Activated B cell treated with CpG ODN at 0.5 μM for 24 hours (primary cell): ENCODE measurements at regions of chr14 and their contacts with region 1.

Region 1: DNA sequence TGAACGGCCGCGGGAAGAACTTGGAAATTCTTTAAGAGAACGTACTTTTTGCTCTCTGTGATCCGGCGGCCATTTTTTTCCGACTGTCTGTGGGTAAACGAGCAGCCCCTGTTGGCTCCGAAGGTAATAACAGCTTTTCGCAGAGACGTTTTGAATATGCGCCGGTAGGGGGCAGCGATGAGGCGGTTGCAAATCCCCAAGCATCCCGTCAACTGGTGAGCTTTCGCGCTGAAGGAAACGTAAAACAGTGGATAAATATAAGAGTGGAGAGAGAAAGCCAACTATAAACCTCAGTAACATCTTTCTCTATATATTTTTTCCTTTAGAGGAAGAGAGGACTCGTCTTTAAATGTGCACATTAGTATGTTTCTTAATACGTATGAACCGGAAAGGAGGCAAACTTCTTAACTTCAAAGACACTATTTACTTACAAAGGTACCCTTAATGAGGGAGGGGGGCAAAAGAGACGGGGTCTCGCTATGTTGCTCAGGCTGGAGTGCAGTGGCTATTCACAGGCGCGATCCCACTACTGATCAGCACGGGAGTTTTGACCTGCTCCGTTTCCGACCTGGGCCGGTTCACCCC is 9.6 kb upstream of the NEMF start:
- DNase-seq: peak; percentile 77
- ATAC-seq: peak; percentile 39
- H3K4me3 Mint-ChIP-seq: no peak overlapping the region
- H3K27ac Mint-ChIP-seq: no peak overlapping the region
- H3K4me1 Mint-ChIP-seq: peaks cover 33% of the 10 kb centered on the region
- H3K27me3 Mint-ChIP-seq: peaks cover 2% of the 10 kb centered on the region
- CTCF ChIP-seq: peak; percentile 100

Region 2: DNA sequence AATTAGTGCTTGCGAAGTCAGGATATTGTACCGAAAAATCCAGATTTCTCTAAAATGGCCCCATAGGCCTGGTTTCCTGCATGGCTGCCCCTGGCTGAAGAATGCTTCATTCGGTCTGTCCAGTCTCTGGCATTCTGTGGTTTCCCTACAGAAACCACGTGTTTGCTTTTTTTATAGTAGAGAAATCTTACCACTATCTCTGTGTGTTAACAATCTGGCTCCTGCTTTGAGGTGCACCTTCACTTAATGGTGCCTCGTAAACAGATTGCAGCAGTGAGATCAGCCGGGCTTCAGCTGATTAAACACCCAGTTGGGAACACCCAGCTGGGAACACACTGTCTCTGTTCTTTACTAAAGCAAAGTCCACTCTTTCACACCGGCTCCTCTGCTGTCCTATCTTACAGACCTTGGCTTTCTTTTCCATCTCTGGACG is 220.5 kb before region 1 on chr14:
- CTCF ChIA-PET with region 1: no interaction called
- POLR2A ChIA-PET with region 1: no interaction called
- intact Hi-C with region 1: no loop called
- DNase-seq: no peak
- ATAC-seq: no peak
- H3K4me3 Mint-ChIP-seq: peak overlapping the region; percentile 19
- H3K27ac Mint-ChIP-seq: peak overlapping the region; percentile 13
- H3K4me1 Mint-ChIP-seq: peaks cover 51% of the 10 kb centered on the region
- H3K27me3 Mint-ChIP-seq: no peaks in the 10 kb centered on the region
- CTCF ChIP-seq: no peak

Region 3: GRCh38 chr14:49796025-49796424 is 66.2 kb before region 1 on chr14:
- CTCF ChIA-PET with region 1: no interaction called
- POLR2A ChIA-PET with region 1: no interaction called
- intact Hi-C with region 1: no loop called
- DNase-seq: no peak
- ATAC-seq: no peak
- H3K4me3 Mint-ChIP-seq: no peak overlapping the region
- H3K27ac Mint-ChIP-seq: no peak overlapping the region
- H3K4me1 Mint-ChIP-seq: no peaks in the 10 kb centered on the region
- H3K27me3 Mint-ChIP-seq: no peaks in the 10 kb centered on the region
- CTCF ChIP-seq: no peak

Region 4: DNA sequence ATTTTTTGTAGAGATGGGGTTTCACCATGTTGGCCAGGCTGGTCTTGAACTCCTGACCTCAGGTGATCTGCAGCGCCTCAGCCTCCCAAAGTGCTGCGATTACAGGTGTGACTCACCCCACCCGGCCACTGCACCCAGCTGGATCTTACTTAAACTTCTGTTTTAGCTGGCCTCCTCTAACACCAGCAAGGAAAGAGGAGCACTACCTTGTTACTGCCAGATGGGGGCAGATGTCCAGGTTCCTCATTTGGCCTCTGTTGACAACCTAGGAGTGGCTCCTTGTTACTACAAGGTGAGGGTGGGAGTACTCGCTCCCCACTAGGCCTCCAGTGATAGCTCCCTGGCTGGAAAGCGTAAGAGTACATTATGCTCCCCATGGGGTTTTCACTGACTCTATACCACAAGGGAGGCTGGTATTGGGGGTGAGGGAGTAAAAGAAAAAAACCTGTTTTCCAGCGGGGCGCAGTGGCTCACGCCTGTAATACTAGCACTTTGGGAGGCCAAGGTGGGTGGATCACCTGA is 17.6 kb after region 1 on chr14:
- CTCF ChIA-PET with region 1: interaction called, 11 read pairs
- POLR2A ChIA-PET with region 1: interaction called, 50 read pairs
- intact Hi-C with region 1: no loop called
- DNase-seq: no peak
- ATAC-seq: peak; percentile 90
- H3K4me3 Mint-ChIP-seq: no peak overlapping the region
- H3K27ac Mint-ChIP-seq: peak overlapping the region; percentile 47
- H3K4me1 Mint-ChIP-seq: peaks cover 14% of the 10 kb centered on the region
- H3K27me3 Mint-ChIP-seq: no peaks in the 10 kb centered on the region
- CTCF ChIP-seq: no peak

Region 5: GRCh38 chr14:49959822-49960408 is 97.7 kb after region 1 on chr14:
- CTCF ChIA-PET with region 1: interaction called, 12 read pairs
- POLR2A ChIA-PET with region 1: interaction called, 38 read pairs
- intact Hi-C with region 1: no loop called
- DNase-seq: no peak
- ATAC-seq: peak; percentile 59
- H3K4me3 Mint-ChIP-seq: peak overlapping the region; percentile 71
- H3K27ac Mint-ChIP-seq: peak overlapping the region; percentile 96
- H3K4me1 Mint-ChIP-seq: peaks cover 67% of the 10 kb centered on the region
- H3K27me3 Mint-ChIP-seq: no peaks in the 10 kb centered on the region
- CTCF ChIP-seq: no peak

Region 6: GRCh38 chr14:50038398-50039119 is 176.4 kb after region 1 on chr14:
- CTCF ChIA-PET with region 1: interaction called, 10 read pairs
- POLR2A ChIA-PET with region 1: interaction called, 32 read pairs
- intact Hi-C with region 1: no loop called
- DNase-seq: no peak
- ATAC-seq: peak; percentile 78
- H3K4me3 Mint-ChIP-seq: peak overlapping the region; percentile 52
- H3K27ac Mint-ChIP-seq: peak overlapping the region; percentile 93
- H3K4me1 Mint-ChIP-seq: peaks cover 45% of the 10 kb centered on the region
- H3K27me3 Mint-ChIP-seq: no peaks in the 10 kb centered on the region
- CTCF ChIP-seq: no peak

Region 7: DNA sequence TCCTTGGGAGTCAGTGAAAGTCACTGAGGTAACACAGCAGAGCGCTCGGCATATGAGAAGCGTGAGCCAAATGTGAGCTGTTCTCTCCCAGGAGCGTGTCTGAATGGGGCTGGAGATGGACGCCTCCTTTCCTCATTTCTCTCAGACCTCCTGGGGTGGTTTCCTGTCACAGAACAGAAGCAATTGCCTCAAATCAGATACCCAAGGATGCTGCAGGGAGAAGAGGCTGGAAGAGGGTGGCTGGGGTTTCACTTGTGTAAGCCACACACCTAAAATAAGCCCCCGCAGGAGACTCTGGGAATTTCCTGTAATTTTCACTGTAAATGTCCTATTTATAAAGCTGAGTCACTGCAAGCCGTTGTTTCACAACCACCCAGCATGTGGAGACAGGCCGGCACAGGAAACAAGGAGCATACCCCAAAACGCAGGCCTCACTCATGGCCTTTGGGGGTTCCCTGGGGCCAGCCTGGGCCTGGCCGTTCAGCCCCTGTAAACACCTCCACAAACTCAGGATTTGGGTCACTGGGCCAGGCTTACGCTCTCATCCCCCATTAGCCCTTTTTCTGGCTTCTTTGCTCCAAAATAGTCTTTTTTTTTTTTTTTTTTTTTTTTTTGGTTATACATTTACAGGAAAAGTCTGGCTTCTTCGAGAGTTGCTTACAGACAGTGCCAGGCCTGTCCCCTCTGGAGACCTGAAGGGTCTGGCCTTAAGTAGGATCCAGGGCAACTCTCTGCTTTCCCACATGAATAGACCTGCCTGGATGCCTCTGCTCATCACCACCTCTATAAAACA is 198.9 kb after region 1 on chr14:
- CTCF ChIA-PET with region 1: interaction called, 26 read pairs
- POLR2A ChIA-PET with region 1: interaction called, 156 read pairs
- intact Hi-C with region 1: loop called (anchors 1 kb)
- DNase-seq: no peak
- ATAC-seq: peak; percentile 0
- H3K4me3 Mint-ChIP-seq: peak overlapping the region; percentile 87
- H3K27ac Mint-ChIP-seq: peak overlapping the region; percentile 100
- H3K4me1 Mint-ChIP-seq: peaks cover 88% of the 10 kb centered on the region
- H3K27me3 Mint-ChIP-seq: no peaks in the 10 kb centered on the region
- CTCF ChIP-seq: no peak

Region 8: GRCh38 chr14:50099335-50099734 is 237.2 kb after region 1 on chr14:
- CTCF ChIA-PET with region 1: interaction called, 63 read pairs
- POLR2A ChIA-PET with region 1: interaction called, 92 read pairs
- intact Hi-C with region 1: no loop called
- DNase-seq: no peak
- ATAC-seq: no peak
- H3K4me3 Mint-ChIP-seq: no peak overlapping the region
- H3K27ac Mint-ChIP-seq: peak overlapping the region; percentile 62
- H3K4me1 Mint-ChIP-seq: peaks cover 74% of the 10 kb centered on the region
- H3K27me3 Mint-ChIP-seq: no peaks in the 10 kb centered on the region
- CTCF ChIP-seq: no peak

Region 9: GRCh38 chr14:50231475-50232275 is 369.5 kb after region 1 on chr14 and contains the start of gene SOS2:
- CTCF ChIA-PET with region 1: no interaction called
- POLR2A ChIA-PET with region 1: interaction called, 17 read pairs
- intact Hi-C with region 1: no loop called
- DNase-seq: peak; percentile 87
- ATAC-seq: peak; percentile 87
- H3K4me3 Mint-ChIP-seq: peak within 1 kb of the TSS; percentile 93
- H3K27ac Mint-ChIP-seq: peak within 1 kb of the TSS; percentile 92
- H3K4me1 Mint-ChIP-seq: peaks cover 35% of the 10 kb centered on the region
- H3K27me3 Mint-ChIP-seq: no peaks in the 10 kb centered on the region
- CTCF ChIP-seq: no peak
- total RNA-seq, gene SOS2: 29.1 and 32.0 TPM in 2 replicates